Activated CD4-positive, alpha-beta memory T cell treated with anti-CD3 and anti-CD28 coated beads for 36 hours (primary cell): ENCODE measurements at regions of chr9 and their contacts with region 1.

Region 1: GRCh38 chr9:93154315-93154903 is 20.4 kb upstream of the NINJ1 start:
- DNase-seq: peak; percentile 69
- H3K4me3 Mint-ChIP-seq: no peak overlapping the region
- H3K27ac Mint-ChIP-seq: no peak overlapping the region
- H3K4me1 Mint-ChIP-seq: peaks cover 30% of the 10 kb centered on the region
- H3K27me3 Mint-ChIP-seq: no peaks in the 10 kb centered on the region

Region 2: DNA sequence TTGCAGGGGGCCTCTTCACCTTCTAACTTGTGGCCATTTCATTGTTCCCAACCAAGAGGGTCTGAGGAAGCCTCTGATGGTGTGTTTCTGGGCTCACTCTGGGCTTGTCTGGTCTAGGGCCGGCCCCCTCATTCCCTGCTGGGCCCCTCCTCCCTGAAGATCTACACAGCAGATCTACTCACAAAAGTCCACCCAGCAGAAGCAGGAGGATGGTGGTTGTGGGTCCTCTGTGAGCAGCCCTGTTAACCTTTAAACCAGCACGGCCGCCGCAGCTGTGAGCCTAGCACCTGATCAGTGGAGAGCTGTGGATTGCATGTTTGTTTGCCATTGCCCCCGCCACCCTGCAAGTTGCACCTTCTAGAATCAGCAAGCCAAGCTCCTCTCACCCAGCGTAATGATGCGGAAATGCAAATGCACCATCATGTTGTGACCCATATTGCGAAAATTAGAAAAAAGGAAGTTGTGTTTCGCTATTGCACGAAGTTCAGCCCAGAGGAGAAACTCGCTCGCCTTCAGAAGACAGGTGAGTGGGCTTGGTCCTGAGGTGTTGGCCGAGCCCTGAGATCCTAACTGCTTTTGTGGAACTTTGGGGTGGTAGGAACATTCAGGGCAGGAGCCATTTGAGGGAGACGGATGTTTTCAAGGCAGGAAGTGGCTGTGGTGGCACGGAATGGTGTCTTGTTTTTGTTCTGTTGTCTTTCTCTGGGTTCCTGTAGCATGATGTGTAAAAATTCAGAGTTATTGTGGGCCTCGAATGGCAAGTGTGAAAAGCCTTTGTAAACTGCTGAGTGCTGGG is 190.4 kb before region 1 on chr9:
- CTCF ChIA-PET with region 1: no interaction called
- POLR2A ChIA-PET with region 1: interaction called, 3 read pairs
- intact Hi-C with region 1: loop called (anchors 2 kb)
- DNase-seq: peak; percentile 86
- H3K4me3 Mint-ChIP-seq: peak overlapping the region; percentile 96
- H3K27ac Mint-ChIP-seq: peak overlapping the region; percentile 100
- H3K4me1 Mint-ChIP-seq: peaks cover 57% of the 10 kb centered on the region
- H3K27me3 Mint-ChIP-seq: no peaks in the 10 kb centered on the region

Region 3: GRCh38 chr9:92986176-92987085 is 168.0 kb before region 1 on chr9:
- CTCF ChIA-PET with region 1: interaction called, 3 read pairs
- POLR2A ChIA-PET with region 1: no interaction called
- intact Hi-C with region 1: loop called (anchors 2 kb)
- DNase-seq: peak; percentile 72
- H3K4me3 Mint-ChIP-seq: no peak overlapping the region
- H3K27ac Mint-ChIP-seq: peak overlapping the region; percentile 78
- H3K4me1 Mint-ChIP-seq: peaks cover 76% of the 10 kb centered on the region
- H3K27me3 Mint-ChIP-seq: no peaks in the 10 kb centered on the region

Region 4: DNA sequence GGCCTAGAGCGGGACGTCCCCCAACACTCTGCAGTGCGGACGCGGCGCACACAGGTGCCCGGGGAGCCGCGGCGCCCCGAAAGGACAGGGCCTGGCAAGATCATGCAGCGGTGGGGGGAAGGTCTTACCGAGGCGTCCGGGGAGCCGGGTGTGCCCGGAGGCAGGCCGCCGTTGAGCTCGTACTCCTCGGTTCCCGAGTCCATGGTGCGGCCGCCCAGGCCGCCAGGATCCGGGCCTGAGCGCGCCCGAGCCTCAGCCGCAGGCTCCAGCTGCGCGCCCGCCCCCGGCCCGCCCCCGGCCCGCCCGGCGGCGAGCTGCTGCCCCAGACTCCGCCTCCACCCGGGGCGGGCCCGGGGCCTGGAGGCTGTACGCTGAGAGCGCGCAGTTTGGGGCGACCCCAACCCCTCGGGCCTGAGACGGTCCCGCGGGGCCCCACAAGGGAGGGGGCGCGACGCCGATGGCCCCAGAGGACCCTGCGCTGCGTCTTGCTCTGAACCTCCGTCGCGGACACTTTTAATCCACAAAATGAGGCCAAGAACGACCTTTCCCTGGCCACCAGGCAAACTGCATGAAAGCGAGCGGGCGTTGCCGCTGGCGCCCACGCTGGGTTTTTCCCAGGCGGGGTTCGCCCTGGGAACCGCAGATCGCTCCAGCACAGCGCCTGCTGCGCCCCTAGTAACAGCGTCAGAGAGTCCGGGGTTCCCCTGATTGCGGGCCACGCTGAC is 20.2 kb before region 1 on chr9 and contains the start of gene NINJ1:
- CTCF ChIA-PET with region 1: interaction called, 10 read pairs
- POLR2A ChIA-PET with region 1: interaction called, 10 read pairs
- intact Hi-C with region 1: loop called (anchors 1 kb)
- DNase-seq: peak; percentile 94
- H3K4me3 Mint-ChIP-seq: peak within 1 kb of the TSS; percentile 94
- H3K27ac Mint-ChIP-seq: peak within 1 kb of the TSS; percentile 89
- H3K4me1 Mint-ChIP-seq: peaks cover 60% of the 10 kb centered on the region
- H3K27me3 Mint-ChIP-seq: no peaks in the 10 kb centered on the region
- total RNA-seq, gene NINJ1: 77.9 to 82.0 TPM

Region 5: DNA sequence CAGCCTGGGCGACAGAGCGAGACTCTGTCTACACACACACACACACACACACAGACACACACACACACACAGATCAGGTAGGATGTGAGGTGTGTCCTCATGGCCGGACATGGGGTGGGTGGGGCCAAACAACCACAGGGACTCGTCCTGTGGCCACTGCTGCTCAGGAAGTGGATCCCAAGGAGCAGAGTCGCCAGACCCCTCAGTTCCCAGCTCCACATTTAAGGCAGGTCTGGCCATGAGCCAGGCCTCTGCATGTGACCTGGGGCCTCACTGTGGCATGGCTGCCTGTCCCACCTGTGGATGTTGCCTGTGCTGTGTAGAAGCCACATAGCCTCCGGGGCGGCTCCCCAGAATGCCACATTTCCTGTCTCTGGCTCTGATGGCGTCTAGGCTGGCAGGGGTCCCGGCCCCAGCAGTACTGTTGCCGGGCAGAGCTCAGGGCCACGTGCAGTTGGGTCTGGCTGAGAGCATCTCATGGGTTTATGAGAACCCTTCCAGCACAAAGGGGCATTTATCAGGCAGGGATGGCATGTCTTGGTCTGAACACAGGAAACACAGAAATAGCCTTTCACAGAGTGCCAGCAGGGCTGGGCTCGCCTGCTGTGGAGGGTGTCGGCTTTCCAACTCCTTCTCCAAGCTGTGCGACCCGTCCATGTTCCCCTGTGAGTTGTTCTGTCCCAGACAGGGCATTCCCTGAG is 10.4 kb before region 1 on chr9:
- CTCF ChIA-PET with region 1: interaction called, 10 read pairs
- POLR2A ChIA-PET with region 1: no interaction called
- intact Hi-C with region 1: loop called (anchors 1 kb)
- DNase-seq: peak; percentile 63
- H3K4me3 Mint-ChIP-seq: no peak overlapping the region
- H3K27ac Mint-ChIP-seq: peak overlapping the region; percentile 82
- H3K4me1 Mint-ChIP-seq: peaks cover 59% of the 10 kb centered on the region
- H3K27me3 Mint-ChIP-seq: no peaks in the 10 kb centered on the region

Region 6: GRCh38 chr9:94166237-94166963 is 1012.0 kb after region 1 on chr9:
- CTCF ChIA-PET with region 1: no interaction called
- POLR2A ChIA-PET with region 1: no interaction called
- intact Hi-C with region 1: loop called (anchors 2 kb)
- DNase-seq: peak; percentile 97
- H3K4me3 Mint-ChIP-seq: peak overlapping the region; percentile 81
- H3K27ac Mint-ChIP-seq: peak overlapping the region; percentile 81
- H3K4me1 Mint-ChIP-seq: peaks cover 43% of the 10 kb centered on the region
- H3K27me3 Mint-ChIP-seq: no peaks in the 10 kb centered on the region